ENCODE measurements at regions of chr1 and their contacts with region 1.

Region 1: GRCh38 chr1:205211169-205211838 is at the start of gene DSTYK:
- DNase-seq: peak; percentile 96
- H3K4me3 ChIP-seq: peak within 1 kb of the TSS; percentile 100
- H3K27ac ChIP-seq: peak within 1 kb of the TSS; percentile 95 to 96
- H3K4me1 ChIP-seq: peaks cover 5% of the 10 kb centered on the region
- H3K27me3 ChIP-seq: no peaks in the 10 kb centered on the region
- CTCF ChIP-seq: no peak
- POLR2A ChIP-seq: no peak
- total RNA-seq, gene DSTYK: 15.2 to 17.2 TPM

Region 2: DNA sequence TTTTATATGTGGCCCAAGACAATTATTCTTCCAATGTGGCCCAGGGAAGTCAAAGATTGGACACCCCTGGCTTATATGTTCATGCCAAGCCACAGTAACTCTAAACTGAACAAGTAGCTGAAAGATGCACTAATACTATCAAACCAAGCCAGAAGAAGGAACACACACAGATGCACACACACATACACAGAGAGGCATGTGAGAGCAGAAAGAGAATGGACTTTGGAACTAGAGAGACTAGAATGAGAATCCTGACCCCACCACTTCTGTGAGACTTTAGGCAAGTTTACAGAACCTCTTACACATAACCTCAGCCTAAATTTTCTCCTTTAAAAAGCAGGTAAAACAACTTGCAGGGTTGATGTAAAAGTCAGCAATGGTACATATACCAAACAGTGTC is 115.9 kb before region 1 on chr1:
- intact Hi-C with region 1: no loop called
- DNase-seq: no peak
- H3K4me3 ChIP-seq: no peak overlapping the region
- H3K27ac ChIP-seq: no peak overlapping the region
- H3K4me1 ChIP-seq: no peaks in the 10 kb centered on the region
- H3K27me3 ChIP-seq: no peaks in the 10 kb centered on the region
- CTCF ChIP-seq: no peak
- POLR2A ChIP-seq: no peak

Region 3: GRCh38 chr1:205121660-205122488 is 89.4 kb before region 1 on chr1 and contains the start of gene RBBP5:
- intact Hi-C with region 1: loop called (anchors 5 kb)
- DNase-seq: peak; percentile 97
- H3K4me3 ChIP-seq: peak within 1 kb of the TSS; percentile 84 to 98
- H3K27ac ChIP-seq: peak within 1 kb of the TSS; percentile 93 to 98
- H3K4me1 ChIP-seq: peaks cover 13% of the 10 kb centered on the region
- H3K27me3 ChIP-seq: no peaks in the 10 kb centered on the region
- CTCF ChIP-seq: peak; percentile 45 to 69 (median 57)
- POLR2A ChIP-seq: no peak
- total RNA-seq, gene RBBP5: 19.1 to 20.3 TPM